Ovary (tissue), 10 donors: ENCODE measurements at regions of chr19 and their contacts with region 1.

Region 1: DNA sequence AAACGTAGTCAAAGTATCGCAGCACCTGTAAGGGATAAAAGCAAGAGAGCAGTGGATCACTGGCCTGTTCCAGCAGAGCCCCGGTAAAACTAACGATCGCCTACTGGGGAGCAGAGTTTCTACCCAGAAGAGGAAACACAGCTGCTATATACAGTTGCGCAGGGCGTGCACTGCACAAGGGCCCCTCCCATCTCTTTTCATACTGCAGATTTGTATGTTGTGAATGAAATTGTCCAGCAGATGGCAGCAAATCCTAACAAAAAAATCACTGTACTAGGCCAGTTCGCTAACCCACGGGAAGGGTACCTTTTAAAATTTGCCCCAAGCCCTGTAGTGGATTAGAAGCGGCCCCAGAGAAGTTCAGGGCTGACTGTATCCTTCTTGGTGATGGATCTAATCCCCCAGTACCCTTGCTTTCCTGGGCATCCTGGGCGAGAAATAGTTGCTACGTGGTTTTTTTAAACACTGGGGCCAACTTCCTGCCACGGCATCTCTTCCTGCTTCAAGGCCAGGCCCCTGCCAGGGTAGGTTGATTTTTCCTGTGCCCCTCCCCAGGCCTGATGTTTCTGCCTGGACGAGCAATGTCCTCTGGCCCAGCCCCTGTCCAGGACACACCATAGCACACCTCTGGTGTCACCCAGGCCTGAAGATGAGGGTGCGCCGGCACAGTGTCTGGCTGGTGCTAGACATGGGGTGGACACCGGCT is 127.0 kb downstream of the IER2 start:
- DNase-seq: peak; percentile 18 to 49 (median 43)
- H3K4me3 ChIP-seq: no peak overlapping the region
- H3K27ac ChIP-seq: no peak overlapping the region
- H3K4me1 ChIP-seq: no peaks in the 10 kb centered on the region
- H3K27me3 ChIP-seq: no peaks in the 10 kb centered on the region
- CTCF ChIP-seq: peak; percentile 32 to 53 (median 37)
- EP300 ChIP-seq: no peak
- POLR2A ChIP-seq: no peak

Region 2: GRCh38 chr19:13212759-13213330 is 64.4 kb before region 1 on chr19:
- intact Hi-C with region 1: no loop called
- DNase-seq: peak; percentile 18 to 58 (median 43)
- H3K4me3 ChIP-seq: no peak overlapping the region
- H3K27ac ChIP-seq: no peak overlapping the region
- H3K4me1 ChIP-seq: peaks cover 2% of the 10 kb centered on the region
- H3K27me3 ChIP-seq: no peaks in the 10 kb centered on the region
- CTCF ChIP-seq: no peak
- EP300 ChIP-seq: no peak
- POLR2A ChIP-seq: no peak

Region 3: DNA sequence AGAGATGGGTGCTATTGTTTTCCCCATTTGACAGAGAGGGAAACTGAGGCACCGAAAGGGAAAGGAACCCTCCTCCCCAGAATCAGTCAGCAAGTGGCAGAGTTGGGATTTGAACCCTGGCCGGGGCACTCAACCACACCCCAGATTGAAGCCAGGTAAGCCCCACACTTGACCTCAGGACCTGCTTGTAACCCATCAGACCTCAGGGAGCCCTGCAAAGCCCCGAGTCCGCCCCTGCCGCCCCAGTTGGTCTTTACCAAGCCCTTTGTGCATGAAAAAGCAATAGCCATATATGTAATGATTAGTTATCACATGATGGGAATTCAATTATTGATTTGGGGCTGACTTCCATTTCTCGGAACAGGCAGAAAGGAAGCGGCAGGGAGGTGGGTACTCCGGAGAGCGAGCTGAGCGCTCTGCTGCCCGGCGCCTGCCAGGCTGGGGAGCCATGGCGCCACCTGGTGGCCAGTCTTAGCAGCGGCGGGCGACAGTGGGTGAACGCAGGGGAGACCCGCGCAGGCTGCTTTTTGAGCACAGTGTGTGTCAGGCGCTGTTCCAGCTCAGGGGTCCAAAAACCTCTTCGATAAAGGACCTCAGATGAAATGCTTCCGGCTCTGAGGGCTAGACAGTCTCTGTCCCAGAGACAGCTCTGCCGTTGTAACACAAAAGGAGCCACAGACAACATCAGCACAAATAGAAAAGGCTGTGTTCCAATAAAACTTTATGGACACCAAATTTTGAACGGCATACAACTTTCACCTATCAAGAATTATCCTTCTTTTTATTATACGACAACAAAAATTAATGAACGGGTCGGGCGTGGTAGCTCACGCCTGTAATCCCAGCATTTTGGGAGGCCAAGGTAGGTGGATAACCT is 311.9 kb after region 1 on chr19:
- intact Hi-C with region 1: loop called (anchors 10 kb)
- DNase-seq: peak; percentile 40 to 76 (median 62)
- H3K4me3 ChIP-seq: no peak overlapping the region
- H3K27ac ChIP-seq: no peak overlapping the region
- H3K4me1 ChIP-seq: no peaks in the 10 kb centered on the region
- H3K27me3 ChIP-seq: no peaks in the 10 kb centered on the region
- CTCF ChIP-seq: peak; percentile 50 to 80 (median 54)
- EP300 ChIP-seq: no peak
- POLR2A ChIP-seq: no peak

Region 4: DNA sequence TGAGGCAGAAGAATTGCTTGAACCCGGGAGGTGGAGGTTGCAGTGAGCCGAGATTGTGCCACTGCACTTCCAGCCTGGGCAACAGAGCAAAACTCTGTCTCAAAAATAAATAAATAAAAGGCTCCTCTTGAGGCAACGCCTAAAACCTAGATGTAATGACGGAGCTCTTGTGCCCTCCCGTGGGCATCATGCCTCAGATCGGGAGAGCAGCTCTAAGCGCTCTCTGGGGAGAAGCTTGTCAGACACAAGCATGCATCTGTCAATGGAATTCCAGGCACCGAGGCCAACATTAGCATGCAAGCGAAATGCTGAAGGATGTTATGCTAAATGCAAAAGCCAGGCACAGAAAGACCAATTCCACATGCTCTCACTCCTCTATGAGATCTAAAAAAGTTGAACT is 441.5 kb after region 1 on chr19:
- intact Hi-C with region 1: loop called in 2 of 4 experiments (anchors 10 kb)
- DNase-seq: no peak
- H3K4me3 ChIP-seq: no peak overlapping the region
- H3K27ac ChIP-seq: no peak overlapping the region
- H3K4me1 ChIP-seq: no peaks in the 10 kb centered on the region
- H3K27me3 ChIP-seq: no peaks in the 10 kb centered on the region
- CTCF ChIP-seq: no peak
- EP300 ChIP-seq: no peak
- POLR2A ChIP-seq: no peak

Region 5: DNA sequence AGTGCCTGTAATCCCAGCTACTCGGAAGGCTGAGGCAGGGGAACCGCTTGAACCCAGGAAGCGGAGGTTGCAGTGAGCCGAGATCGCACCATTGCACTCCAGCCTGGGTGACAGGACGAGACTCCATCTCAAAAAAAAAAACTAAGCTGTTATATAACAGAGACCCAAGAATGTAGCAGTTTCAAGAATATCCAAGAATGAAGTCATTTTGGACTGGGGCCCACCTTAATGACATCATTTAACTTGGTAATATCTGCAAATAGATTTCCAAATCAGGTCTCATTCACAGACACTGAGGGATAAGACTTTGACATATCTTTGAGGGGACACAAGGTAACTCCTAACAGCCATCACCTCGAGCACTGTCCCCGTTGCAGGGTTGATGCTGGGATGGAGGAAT is 450.5 kb after region 1 on chr19:
- intact Hi-C with region 1: loop called in 1 of 4 experiments (anchors 10 kb)
- DNase-seq: no peak
- H3K4me3 ChIP-seq: no peak overlapping the region
- H3K27ac ChIP-seq: no peak overlapping the region
- H3K4me1 ChIP-seq: peaks cover 3% of the 10 kb centered on the region
- H3K27me3 ChIP-seq: no peaks in the 10 kb centered on the region
- CTCF ChIP-seq: no peak
- EP300 ChIP-seq: no peak
- POLR2A ChIP-seq: no peak

Region 6: GRCh38 chr19:14048443-14049153 is 771.3 kb after region 1 on chr19:
- intact Hi-C with region 1: loop called in 1 of 4 experiments (anchors 10 kb)
- DNase-seq: no peak
- H3K4me3 ChIP-seq: no peak overlapping the region
- H3K27ac ChIP-seq: no peak overlapping the region
- H3K4me1 ChIP-seq: no peaks in the 10 kb centered on the region
- H3K27me3 ChIP-seq: no peaks in the 10 kb centered on the region
- CTCF ChIP-seq: no peak
- EP300 ChIP-seq: no peak
- POLR2A ChIP-seq: no peak

Region 7: GRCh38 chr19:14073261-14073924 is 796.1 kb after region 1 on chr19:
- intact Hi-C with region 1: loop called in 2 of 4 experiments (anchors 10 kb)
- DNase-seq: peak; percentile 57 to 83 (median 72)
- H3K4me3 ChIP-seq: peak overlapping the region; percentile 58
- H3K27ac ChIP-seq: peak overlapping the region in 1 of 2 donors; percentile 44
- H3K4me1 ChIP-seq: peaks cover 7% of the 10 kb centered on the region
- H3K27me3 ChIP-seq: no peaks in the 10 kb centered on the region
- CTCF ChIP-seq: peak; percentile 10 to 84 (median 84)
- EP300 ChIP-seq: no peak
- POLR2A ChIP-seq: no peak